Activated T-helper 2 cell treated with anti-CD3 and anti-CD28 coated beads, Interferon-gamma antibody, Interleukin-2, Interleukin-4, amounts not matched to agents 10 μg/mL and 5 μg/mL and 100 μg/mL, durations not matched to agents 14 hours and 24 hours and 36 hours (primary cell): ENCODE measurements at regions of chr7 and their contacts with region 1.

Region 1: GRCh38 chr7:94509879-94510581 is 421 bp downstream of the CASD1 start:
- DNase-seq: peak; percentile 60
- H3K4me3 Mint-ChIP-seq: peak overlapping the region; percentile 85
- H3K27ac Mint-ChIP-seq: peak overlapping the region; percentile 86
- H3K4me1 Mint-ChIP-seq: peaks cover 36% of the 10 kb centered on the region
- H3K27me3 Mint-ChIP-seq: no peaks in the 10 kb centered on the region

Region 2: DNA sequence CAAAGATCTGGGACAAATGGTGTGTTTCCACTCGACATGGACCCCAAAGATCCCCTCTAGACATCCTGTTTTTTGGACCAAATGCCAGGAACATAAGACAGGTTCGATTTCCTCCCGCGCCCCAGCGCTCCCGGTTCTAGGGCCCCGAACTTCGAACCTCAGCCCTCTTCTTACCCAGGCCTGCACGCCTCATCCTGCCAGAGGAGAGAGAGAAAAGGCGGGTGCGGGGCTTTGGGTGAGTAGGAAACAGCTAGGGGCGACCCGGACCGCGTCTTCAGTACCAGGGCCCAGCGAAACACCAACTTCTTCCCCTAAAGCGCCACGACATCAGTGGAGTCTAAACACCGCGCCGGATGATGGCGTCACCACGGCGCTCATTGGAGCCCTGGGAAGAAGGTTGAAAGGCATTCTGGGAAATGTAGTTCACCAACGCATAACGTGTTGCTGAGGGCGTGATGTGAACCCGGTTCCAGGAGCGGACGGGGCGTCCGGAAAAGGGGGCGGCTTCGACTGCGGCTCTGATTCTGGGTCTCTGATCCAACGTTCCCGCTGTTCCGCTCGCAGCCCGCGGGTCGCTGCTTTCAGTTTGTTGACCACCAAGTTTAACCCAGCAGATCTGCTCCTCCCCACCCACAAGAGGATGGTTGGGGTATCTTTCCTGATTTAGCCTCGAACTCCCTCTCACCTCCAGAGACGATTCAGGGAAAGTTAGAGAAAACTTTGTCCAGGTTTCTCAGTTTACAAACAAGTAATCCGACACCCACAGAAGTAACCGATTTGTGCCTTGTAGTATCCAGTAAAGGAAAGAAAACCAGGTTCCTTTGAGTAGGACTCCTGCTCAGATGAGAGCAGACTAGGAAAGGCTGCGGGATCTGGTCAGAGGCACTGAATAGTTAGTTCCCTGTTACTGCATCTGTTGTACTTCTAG is 505.7 kb before region 1 on chr7 and contains the start of gene BET1:
- intact Hi-C with region 1: loop called (anchors 10 kb)
- DNase-seq: peak; percentile 87
- H3K4me3 Mint-ChIP-seq: peak within 1 kb of the TSS; percentile 96
- H3K27ac Mint-ChIP-seq: peak within 1 kb of the TSS; percentile 94
- H3K4me1 Mint-ChIP-seq: peaks cover 24% of the 10 kb centered on the region
- H3K27me3 Mint-ChIP-seq: peaks cover 16% of the 10 kb centered on the region
- total RNA-seq, gene BET1: 19.4 and 22.3 TPM in 2 replicates

Region 3: GRCh38 chr7:94458041-94458440 is 52.0 kb before region 1 on chr7:
- intact Hi-C with region 1: loop called (anchors 5 kb)
- DNase-seq: no peak
- H3K4me3 Mint-ChIP-seq: no peak overlapping the region
- H3K27ac Mint-ChIP-seq: no peak overlapping the region
- H3K4me1 Mint-ChIP-seq: no peaks in the 10 kb centered on the region
- H3K27me3 Mint-ChIP-seq: peaks cover 1% of the 10 kb centered on the region

Region 4: GRCh38 chr7:94472608-94473007 is 37.4 kb before region 1 on chr7:
- intact Hi-C with region 1: no loop called
- DNase-seq: no peak
- H3K4me3 Mint-ChIP-seq: no peak overlapping the region
- H3K27ac Mint-ChIP-seq: no peak overlapping the region
- H3K4me1 Mint-ChIP-seq: no peaks in the 10 kb centered on the region
- H3K27me3 Mint-ChIP-seq: peaks cover 19% of the 10 kb centered on the region

Region 5: DNA sequence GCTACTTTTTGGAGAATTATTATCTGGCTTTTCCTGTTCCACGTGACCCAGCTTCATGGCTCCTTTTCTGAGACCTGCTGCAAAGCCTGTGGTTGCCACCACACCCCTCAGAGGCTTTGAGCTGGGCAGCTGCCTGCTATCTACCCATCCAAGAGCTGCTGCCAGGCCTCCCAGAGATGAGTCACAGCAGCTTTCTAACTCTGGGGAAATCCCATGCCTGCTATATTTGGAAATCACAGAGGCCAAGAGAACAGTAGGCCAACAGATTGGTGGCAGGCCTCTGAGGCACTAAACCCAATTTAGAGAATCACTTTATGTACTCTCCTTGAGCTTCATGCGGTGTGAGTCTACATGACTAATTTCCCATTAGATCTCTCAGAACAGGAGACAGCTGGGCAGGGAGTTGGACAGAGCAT is 110.7 kb after region 1 on chr7:
- intact Hi-C with region 1: loop called (anchors 5 kb)
- DNase-seq: peak; percentile 20
- H3K4me3 Mint-ChIP-seq: no peak overlapping the region
- H3K27ac Mint-ChIP-seq: peak overlapping the region; percentile 40
- H3K4me1 Mint-ChIP-seq: peaks cover 10% of the 10 kb centered on the region
- H3K27me3 Mint-ChIP-seq: peaks cover 5% of the 10 kb centered on the region

Region 6: GRCh38 chr7:94657771-94658693 is 148.0 kb after region 1 on chr7:
- intact Hi-C with region 1: loop called (anchors 2 kb)
- DNase-seq: peak; percentile 89
- H3K4me3 Mint-ChIP-seq: peak overlapping the region; percentile 82
- H3K27ac Mint-ChIP-seq: no peak overlapping the region
- H3K4me1 Mint-ChIP-seq: peaks cover 22% of the 10 kb centered on the region
- H3K27me3 Mint-ChIP-seq: peaks cover 24% of the 10 kb centered on the region